ENCODE measurements at regions of chr13 and their contacts with region 1.

Region 1: GRCh38 chr13:21330126-21330861 is 128.8 kb downstream of the ZDHHC20 start:
- DNase-seq: peak; percentile 52
- H3K4me3 Mint-ChIP-seq: peak overlapping the region; percentile 46
- H3K27ac Mint-ChIP-seq: peak overlapping the region; percentile 63
- H3K4me1 Mint-ChIP-seq: peaks cover 57% of the 10 kb centered on the region
- H3K27me3 Mint-ChIP-seq: no peaks in the 10 kb centered on the region

Region 2: DNA sequence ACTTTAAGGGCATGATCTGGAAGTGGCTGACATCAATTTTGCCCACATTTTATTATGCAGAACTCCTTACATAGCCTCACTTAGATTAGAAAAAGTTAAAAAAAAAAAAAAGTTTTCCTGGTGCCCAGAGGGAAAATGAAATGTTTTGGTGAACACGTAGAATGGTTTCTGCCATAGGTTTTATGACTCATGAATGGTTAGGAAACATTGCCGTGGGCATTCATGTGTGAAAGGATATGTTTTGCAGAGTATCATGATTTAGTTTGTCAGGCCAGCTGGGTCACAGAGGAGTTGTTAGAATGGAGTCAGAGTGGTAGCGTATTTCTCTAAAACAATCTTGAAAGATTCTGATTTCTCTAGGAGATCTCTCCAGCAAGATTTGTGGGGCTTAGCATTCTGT is 20.1 kb before region 1 on chr13:
- CTCF ChIA-PET with region 1: no interaction called
- POLR2A ChIA-PET with region 1: no interaction called
- DNase-seq: no peak
- H3K4me3 Mint-ChIP-seq: no peak overlapping the region
- H3K27ac Mint-ChIP-seq: no peak overlapping the region
- H3K4me1 Mint-ChIP-seq: peaks cover 8% of the 10 kb centered on the region
- H3K27me3 Mint-ChIP-seq: no peaks in the 10 kb centered on the region

Region 3: GRCh38 chr13:21344662-21345176 is 14.4 kb after region 1 on chr13:
- CTCF ChIA-PET with region 1: no interaction called
- POLR2A ChIA-PET with region 1: interaction called, 11 read pairs
- DNase-seq: peak; percentile 64
- H3K4me3 Mint-ChIP-seq: peak overlapping the region; percentile 67
- H3K27ac Mint-ChIP-seq: peak overlapping the region; percentile 86
- H3K4me1 Mint-ChIP-seq: peaks cover 31% of the 10 kb centered on the region
- H3K27me3 Mint-ChIP-seq: no peaks in the 10 kb centered on the region

Region 4: GRCh38 chr13:21359855-21360254 is 29.6 kb after region 1 on chr13:
- CTCF ChIA-PET with region 1: no interaction called
- POLR2A ChIA-PET with region 1: no interaction called
- DNase-seq: no peak
- H3K4me3 Mint-ChIP-seq: no peak overlapping the region
- H3K27ac Mint-ChIP-seq: no peak overlapping the region
- H3K4me1 Mint-ChIP-seq: peaks cover 2% of the 10 kb centered on the region
- H3K27me3 Mint-ChIP-seq: no peaks in the 10 kb centered on the region